SK-N-SH (cell line): ENCODE measurements at regions of chr5 and their contacts with region 1.

Region 1: GRCh38 chr5:154157483-154158378 is 32.8 kb upstream of the GALNT10 start:
- DNase-seq: no peak
- H3K4me3 ChIP-seq: no peak overlapping the region; a peak in 1 of 4 replicates
- H3K27ac ChIP-seq: no peak overlapping the region
- H3K4me1 ChIP-seq: peaks cover 0 to 5% of the 10 kb centered on the region in 2 experiments; a peak in 1 of 4 replicates
- H3K27me3 ChIP-seq: no peaks in the 10 kb centered on the region
- CTCF ChIP-seq: peak; percentile 51
- EP300 ChIP-seq: no peak
- RAD21 ChIP-seq: no peak

Region 2: DNA sequence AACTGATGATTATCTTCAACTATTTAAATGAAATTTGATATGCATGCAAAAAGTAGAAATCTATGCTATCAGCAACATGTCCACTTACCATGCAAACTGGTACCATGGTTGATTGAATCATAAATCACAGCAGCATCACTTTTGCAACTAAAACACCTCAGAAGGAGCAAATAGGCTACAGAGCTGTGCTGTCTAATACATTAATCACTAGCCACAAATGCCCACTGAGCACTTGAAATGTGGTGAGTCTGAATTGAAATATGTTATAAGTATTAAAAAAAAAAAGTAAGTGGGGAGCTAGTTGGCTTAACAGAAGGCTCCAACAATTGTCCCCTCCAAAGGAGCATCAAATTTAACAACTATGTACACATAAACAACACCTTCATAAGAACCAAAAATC is 231.5 kb before region 1 on chr5:
- CTCF ChIA-PET with region 1: no interaction called
- POLR2A ChIA-PET with region 1: no interaction called
- DNase-seq: no peak
- H3K4me3 ChIP-seq: no peak overlapping the region
- H3K27ac ChIP-seq: no peak overlapping the region
- H3K4me1 ChIP-seq: no peaks in the 10 kb centered on the region
- H3K27me3 ChIP-seq: no peaks in the 10 kb centered on the region
- CTCF ChIP-seq: no peak
- EP300 ChIP-seq: no peak
- RAD21 ChIP-seq: no peak

Region 3: DNA sequence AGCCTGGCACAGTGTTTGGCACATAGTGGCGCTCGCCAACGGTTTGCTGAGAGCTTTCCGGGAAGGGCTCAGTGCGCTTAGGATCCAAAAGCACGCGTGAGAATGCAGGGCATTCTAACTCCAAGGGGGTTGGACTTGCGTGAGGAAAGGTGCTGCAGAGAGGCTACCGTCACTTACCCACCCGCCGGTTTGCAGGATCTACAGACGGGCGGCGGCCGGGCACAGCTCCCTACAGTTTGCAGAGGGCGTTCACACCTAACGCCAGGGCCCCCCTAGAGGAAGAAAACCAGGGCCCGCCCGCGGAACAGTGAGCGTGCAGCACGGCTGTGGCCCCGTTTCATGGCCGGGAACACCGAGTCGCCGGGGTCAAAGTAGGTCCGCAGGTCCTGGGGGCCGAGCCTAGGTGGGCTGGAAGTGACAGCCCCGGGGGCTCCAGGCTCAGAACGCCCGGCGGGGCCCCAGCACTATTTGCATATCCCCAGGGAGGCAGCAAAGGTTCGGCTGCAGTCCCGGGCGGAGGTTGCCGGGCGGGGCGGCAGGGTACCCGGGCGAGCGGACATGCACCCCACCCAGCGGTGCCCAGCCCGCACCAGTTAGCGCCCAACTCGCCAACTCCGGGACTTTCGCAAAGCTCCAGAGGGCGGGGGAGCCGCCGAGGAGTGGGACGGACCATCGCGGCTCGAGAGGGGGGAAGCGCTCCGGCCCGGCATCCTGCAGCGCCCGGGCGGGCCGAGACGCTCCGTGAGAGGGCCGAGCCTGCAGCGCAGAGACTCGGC is 32.3 kb after region 1 on chr5:
- CTCF ChIA-PET with region 1: interaction called, 11 read pairs
- POLR2A ChIA-PET with region 1: no interaction called
- DNase-seq: peak; percentile 97
- H3K4me3 ChIP-seq: peak overlapping the region; percentile 88 to 96
- H3K27ac ChIP-seq: peak overlapping the region; percentile 38 to 55; a peak in 3 of 4 replicates
- H3K4me1 ChIP-seq: peaks cover 17 to 31% of the 10 kb centered on the region in 2 experiments; a peak in 3 of 4 replicates
- H3K27me3 ChIP-seq: no peaks in the 10 kb centered on the region
- CTCF ChIP-seq: peak; percentile 60
- EP300 ChIP-seq: no peak
- RAD21 ChIP-seq: no peak

Region 4: DNA sequence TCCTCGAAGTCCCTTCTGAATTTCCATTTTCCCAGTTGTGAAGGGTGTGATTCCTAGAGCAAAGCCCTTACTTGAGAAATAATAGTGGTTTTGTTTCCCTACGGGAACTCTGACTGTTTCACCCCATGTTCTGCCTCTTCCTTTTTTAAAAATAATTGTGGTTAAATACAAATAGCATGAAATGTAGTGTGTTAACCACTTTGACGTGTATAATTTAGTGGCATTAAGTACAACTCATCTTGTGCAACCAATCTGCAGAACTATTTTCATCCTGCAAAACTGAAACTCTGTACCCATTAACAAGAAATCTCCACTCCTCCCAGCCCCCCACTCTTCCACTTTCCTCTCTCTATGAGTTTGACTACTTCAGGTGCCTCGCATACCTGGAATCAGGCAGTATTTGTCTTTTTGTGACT is 355.9 kb after region 1 on chr5:
- CTCF ChIA-PET with region 1: no interaction called
- POLR2A ChIA-PET with region 1: no interaction called
- DNase-seq: no peak
- H3K4me3 ChIP-seq: no peak overlapping the region
- H3K27ac ChIP-seq: no peak overlapping the region
- H3K4me1 ChIP-seq: peaks cover 0 to 37% of the 10 kb centered on the region in 2 experiments; a peak in 1 of 4 replicates
- H3K27me3 ChIP-seq: no peaks in the 10 kb centered on the region; the same call in 1 of the 2 replicates
- CTCF ChIP-seq: no peak
- EP300 ChIP-seq: no peak
- RAD21 ChIP-seq: no peak